ENCODE measurements at regions of chr2 and their contacts with region 1.

Region 1: GRCh38 chr2:46569061-46569560 is 89.7 kb downstream of the TMEM247 start:
- DNase-seq: no peak
- ATAC-seq: peak; percentile 83
- H3K4me3 Mint-ChIP-seq: peak overlapping the region; percentile 72
- H3K27ac Mint-ChIP-seq: peak overlapping the region; percentile 100
- H3K4me1 Mint-ChIP-seq: peaks cover 99% of the 10 kb centered on the region
- H3K27me3 Mint-ChIP-seq: no peaks in the 10 kb centered on the region
- CTCF ChIP-seq: no peak

Region 2: DNA sequence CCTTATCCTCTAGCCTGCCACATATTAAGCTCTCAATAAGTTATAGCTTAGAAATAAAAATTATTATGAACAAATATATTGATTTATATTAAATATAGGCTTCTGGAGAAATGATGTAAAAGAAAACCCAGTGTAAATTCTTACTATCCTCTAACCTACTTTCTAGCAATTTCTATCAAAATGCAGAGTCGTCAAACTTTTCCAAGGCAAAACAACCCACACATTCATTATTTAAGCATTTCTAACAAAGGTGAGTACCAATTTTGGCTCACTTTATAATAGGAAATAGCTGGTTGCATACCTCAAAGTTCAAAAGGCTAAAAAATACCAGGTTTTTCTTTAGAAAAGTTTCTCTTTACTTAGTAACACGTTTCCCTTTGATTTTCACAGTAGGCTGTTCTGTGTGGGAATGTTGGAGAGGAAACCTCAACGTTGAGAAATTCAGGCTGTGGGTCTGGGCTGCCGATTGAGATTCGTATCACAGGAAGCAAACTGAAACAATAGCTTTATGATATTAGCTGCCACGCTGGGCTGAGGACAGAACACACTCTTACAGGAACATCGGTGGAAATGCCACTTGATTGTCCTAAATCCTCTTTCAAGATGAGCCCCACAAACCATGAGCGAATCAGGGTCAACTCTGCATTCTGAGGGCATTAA is 219.0 kb before region 1 on chr2:
- CTCF ChIA-PET with region 1: no interaction called
- POLR2A ChIA-PET with region 1: no interaction called
- intact Hi-C with region 1: no loop called
- DNase-seq: no peak
- ATAC-seq: no peak
- H3K4me3 Mint-ChIP-seq: no peak overlapping the region
- H3K27ac Mint-ChIP-seq: no peak overlapping the region
- H3K4me1 Mint-ChIP-seq: peaks cover 17% of the 10 kb centered on the region
- H3K27me3 Mint-ChIP-seq: peaks cover 11% of the 10 kb centered on the region
- CTCF ChIP-seq: no peak

Region 3: GRCh38 chr2:46547223-46548102 is 21.6 kb before region 1 on chr2:
- CTCF ChIA-PET with region 1: interaction called, 13 read pairs
- POLR2A ChIA-PET with region 1: interaction called, 166 read pairs
- intact Hi-C with region 1: loop called (anchors 1 kb)
- DNase-seq: no peak
- ATAC-seq: no peak
- H3K4me3 Mint-ChIP-seq: peak overlapping the region; percentile 78
- H3K27ac Mint-ChIP-seq: peak overlapping the region; percentile 91
- H3K4me1 Mint-ChIP-seq: peaks cover 88% of the 10 kb centered on the region
- H3K27me3 Mint-ChIP-seq: no peaks in the 10 kb centered on the region
- CTCF ChIP-seq: no peak

Region 4: DNA sequence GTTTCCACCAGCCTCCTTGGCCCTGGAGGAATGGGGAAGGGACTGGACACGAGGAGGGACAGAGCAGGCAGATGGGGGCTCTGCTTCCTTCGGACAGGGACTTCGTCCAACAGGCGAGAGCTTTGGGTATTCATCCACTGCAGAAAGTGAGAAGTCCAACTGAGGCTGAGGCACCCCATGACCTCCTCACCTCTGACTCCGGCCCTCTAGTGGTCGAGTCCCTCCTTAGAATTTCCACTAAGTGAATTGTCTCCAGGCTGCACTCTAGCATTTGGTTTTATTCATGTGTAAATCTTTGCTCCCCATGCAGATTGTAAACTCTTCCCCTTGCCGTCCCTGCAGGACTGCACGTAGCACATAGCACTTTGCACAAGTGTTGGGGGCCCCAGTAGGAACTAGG is 14.1 kb before region 1 on chr2:
- CTCF ChIA-PET with region 1: interaction called, 19 read pairs
- POLR2A ChIA-PET with region 1: interaction called, 166 read pairs
- intact Hi-C with region 1: loop called (anchors 1 kb)
- DNase-seq: no peak
- ATAC-seq: peak; percentile 56
- H3K4me3 Mint-ChIP-seq: no peak overlapping the region
- H3K27ac Mint-ChIP-seq: peak overlapping the region; percentile 71
- H3K4me1 Mint-ChIP-seq: peaks cover 97% of the 10 kb centered on the region
- H3K27me3 Mint-ChIP-seq: no peaks in the 10 kb centered on the region
- CTCF ChIP-seq: no peak

Region 5: GRCh38 chr2:46584134-46584848 is 15.2 kb after region 1 on chr2:
- CTCF ChIA-PET with region 1: interaction called, 6 read pairs
- POLR2A ChIA-PET with region 1: interaction called, 3 read pairs
- intact Hi-C with region 1: loop called (anchors 2 kb)
- DNase-seq: no peak
- ATAC-seq: no peak
- H3K4me3 Mint-ChIP-seq: no peak overlapping the region
- H3K27ac Mint-ChIP-seq: no peak overlapping the region
- H3K4me1 Mint-ChIP-seq: peaks cover 5% of the 10 kb centered on the region
- H3K27me3 Mint-ChIP-seq: no peaks in the 10 kb centered on the region
- CTCF ChIP-seq: no peak

Region 6: GRCh38 chr2:46601328-46601963 is 32.3 kb after region 1 on chr2:
- CTCF ChIA-PET with region 1: interaction called, 5 read pairs
- POLR2A ChIA-PET with region 1: interaction called, 3 read pairs
- intact Hi-C with region 1: loop called (anchors 2 kb)
- DNase-seq: no peak
- ATAC-seq: peak; percentile 28
- H3K4me3 Mint-ChIP-seq: no peak overlapping the region
- H3K27ac Mint-ChIP-seq: no peak overlapping the region
- H3K4me1 Mint-ChIP-seq: peaks cover 5% of the 10 kb centered on the region
- H3K27me3 Mint-ChIP-seq: no peaks in the 10 kb centered on the region
- CTCF ChIP-seq: peak; percentile 71